ENCODE measurements at regions of chr21 and their contacts with region 1.

Region 1: DNA sequence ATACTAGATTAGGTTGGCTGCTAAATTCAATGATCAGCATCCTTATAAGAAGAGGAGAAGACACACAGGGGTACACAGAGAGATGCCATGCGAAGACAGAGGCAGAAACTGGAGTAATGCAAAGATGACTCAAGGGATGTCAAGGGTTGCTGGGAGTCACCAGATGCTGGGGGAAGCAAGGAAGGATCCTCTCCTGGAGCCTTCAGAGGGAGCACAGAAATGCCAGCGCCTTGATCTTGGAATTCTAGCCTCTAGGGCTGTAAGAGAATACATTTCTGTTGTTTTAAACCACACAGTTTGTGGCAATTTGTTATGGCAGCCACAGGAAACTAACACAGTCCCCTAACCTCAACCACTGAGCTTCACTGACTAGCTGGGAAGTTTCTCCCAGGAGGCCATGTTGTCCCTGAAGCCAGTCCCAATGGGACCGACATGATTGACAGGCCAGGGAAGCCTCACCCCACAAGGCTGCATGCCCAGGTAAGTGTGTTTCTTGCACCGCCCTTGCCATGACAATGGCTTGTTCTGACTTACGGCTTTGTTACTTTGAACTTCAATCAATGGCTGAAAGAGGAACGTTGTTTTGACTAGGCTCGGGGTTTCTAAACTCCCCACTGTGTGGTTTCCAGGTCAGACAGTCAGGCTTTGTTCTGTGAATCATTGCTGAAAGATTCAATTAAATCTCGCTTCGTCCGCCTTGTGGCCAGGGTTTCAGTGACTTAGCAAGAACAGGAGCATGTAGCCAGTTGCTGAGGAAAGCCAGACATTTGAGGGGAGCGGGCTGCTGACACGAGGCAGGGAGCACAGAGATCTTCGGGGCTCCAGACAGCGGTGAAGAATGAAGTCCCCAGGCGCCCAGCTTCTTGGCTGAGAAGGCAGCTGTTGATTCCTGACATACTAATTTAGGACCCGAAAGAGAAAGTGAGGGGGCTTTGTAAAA is 62.3 kb downstream of the RUNX1 start:
- DNase-seq: peak; percentile 82
- H3K4me3 Mint-ChIP-seq: peak overlapping the region; percentile 61
- H3K27ac Mint-ChIP-seq: peak overlapping the region; percentile 77
- H3K4me1 Mint-ChIP-seq: peaks cover 94% of the 10 kb centered on the region
- H3K27me3 Mint-ChIP-seq: no peaks in the 10 kb centered on the region

Region 2: DNA sequence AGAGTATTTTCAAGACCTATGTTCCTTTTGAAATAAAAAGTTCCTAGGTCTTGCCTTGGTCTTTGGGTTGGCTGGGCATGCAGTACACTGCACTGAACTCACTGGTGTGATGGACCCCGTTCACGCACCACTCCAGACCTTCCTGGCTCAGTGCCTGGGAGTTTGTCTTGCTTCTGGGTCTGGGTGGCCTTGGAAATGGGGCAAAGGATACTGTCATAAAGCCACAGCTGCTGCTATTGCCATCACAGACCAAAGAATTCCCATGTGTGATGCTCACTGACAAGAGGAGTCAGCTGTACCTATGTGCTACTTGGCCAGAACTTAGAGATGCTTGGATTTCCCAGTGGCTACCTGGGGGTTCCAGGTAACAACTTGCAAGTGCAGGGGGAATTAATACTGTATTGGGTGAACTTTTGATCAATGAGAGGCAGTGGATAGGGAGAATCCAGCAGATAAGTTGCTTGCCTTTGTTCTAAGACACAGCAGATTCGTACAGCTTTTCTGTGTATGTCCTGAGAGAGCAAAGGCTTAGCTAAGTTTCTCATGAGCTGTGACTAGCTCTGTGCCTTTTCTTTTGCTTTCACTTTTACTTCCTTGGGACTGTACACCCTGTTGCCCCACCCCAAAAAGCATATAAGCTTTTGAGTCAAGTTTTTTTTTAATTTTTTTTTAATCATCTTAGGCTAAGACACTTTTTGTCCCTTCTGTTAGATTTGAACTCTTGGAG is 53.1 kb before region 1 on chr21:
- CTCF ChIA-PET with region 1: interaction called, 13 read pairs
- POLR2A ChIA-PET with region 1: interaction called, 28 read pairs
- DNase-seq: no peak
- H3K4me3 Mint-ChIP-seq: peak overlapping the region; percentile 63
- H3K27ac Mint-ChIP-seq: peak overlapping the region; percentile 95
- H3K4me1 Mint-ChIP-seq: peaks cover 79% of the 10 kb centered on the region
- H3K27me3 Mint-ChIP-seq: no peaks in the 10 kb centered on the region

Region 3: DNA sequence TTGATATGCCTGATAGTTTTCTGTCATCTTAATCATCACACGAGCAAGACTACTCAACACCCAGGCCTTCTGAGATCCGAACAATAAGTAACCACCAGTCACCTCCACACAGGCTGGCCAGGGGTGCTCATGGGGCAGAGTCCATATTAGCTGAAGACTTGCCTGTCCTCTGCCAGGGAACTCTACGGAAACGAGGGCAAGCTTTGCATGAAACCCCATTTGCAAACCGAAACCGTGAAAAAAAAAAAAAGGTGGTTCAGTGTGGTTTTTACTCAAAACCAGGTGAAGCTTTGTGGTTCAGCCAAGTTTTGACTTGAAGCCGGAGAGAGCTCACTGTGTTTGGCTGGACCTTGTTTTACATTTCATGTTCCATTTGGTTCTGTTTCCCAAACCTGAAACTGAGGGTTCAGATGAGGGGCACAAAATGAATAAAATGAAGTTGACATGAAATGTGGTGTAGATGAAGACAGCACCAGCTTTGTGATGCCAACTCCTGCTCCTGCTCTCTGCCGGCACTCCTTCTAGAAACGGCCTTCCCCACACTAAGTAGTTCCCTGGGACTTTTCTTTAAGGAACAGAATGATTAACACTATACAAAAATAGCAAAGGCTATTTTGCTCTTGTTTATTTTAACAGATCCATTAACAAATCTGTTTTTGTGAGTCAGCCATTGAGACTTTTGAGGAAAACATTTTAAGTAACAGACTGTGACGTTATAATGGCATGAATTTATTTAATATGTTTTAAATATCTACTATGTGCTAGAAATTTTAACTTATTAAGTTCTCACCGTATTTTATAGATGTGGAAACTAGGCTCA is 12.5 kb before region 1 on chr21:
- CTCF ChIA-PET with region 1: interaction called, 20 read pairs
- POLR2A ChIA-PET with region 1: interaction called, 66 read pairs
- DNase-seq: peak; percentile 64
- H3K4me3 Mint-ChIP-seq: peak overlapping the region; percentile 60
- H3K27ac Mint-ChIP-seq: peak overlapping the region; percentile 80
- H3K4me1 Mint-ChIP-seq: peaks cover 78% of the 10 kb centered on the region
- H3K27me3 Mint-ChIP-seq: peaks cover 9% of the 10 kb centered on the region

Region 4: DNA sequence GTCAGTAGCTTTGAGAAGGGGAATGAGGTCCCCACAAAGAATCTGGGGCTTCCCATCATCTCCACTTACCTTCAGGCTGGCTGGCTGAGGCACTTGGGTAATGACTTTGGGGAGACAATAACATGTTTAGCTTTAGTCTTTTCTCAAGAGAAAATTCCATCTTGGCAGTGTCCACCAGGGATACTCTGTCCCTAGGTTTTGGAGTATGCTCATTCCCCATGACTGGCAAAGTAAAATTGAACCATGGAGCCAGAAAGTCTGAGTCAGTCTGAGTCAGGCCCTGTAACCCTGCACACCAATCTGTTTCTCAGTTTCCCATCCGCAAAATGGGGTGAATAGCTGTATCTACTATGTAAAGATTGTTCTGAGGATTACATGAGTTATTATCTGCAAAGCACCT is 34.1 kb after region 1 on chr21:
- CTCF ChIA-PET with region 1: interaction called, 10 read pairs
- POLR2A ChIA-PET with region 1: interaction called, 81 read pairs
- DNase-seq: no peak
- H3K4me3 Mint-ChIP-seq: no peak overlapping the region
- H3K27ac Mint-ChIP-seq: no peak overlapping the region
- H3K4me1 Mint-ChIP-seq: peaks cover 63% of the 10 kb centered on the region
- H3K27me3 Mint-ChIP-seq: no peaks in the 10 kb centered on the region

Region 5: DNA sequence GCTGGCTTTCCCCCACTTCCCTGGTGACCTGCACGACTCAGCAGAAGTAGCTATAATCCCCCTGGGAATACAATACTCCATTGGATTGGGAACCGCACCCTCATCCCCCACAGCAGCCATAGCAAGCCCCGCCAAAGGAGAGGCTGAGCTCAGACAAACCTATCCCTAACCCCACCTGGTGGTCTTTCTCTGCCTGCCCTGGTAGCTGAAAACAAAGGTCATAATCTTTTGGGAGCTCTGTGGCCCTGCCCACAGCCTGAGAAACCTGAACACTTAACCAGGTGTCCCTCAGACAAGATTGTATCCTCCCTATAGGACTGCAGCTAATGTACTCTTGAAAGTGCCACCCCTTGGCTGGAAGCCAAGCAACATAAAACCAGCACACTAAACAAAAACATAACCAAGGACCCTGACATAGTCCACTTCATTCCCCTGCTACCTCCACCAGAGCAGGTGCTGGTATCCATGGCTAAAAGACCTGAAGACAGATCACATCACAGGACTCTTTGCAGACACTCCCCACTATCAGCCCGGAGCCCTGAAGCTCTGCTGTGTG is 133.9 kb after region 1 on chr21:
- CTCF ChIA-PET with region 1: no interaction called
- POLR2A ChIA-PET with region 1: no interaction called
- DNase-seq: no peak
- H3K4me3 Mint-ChIP-seq: no peak overlapping the region
- H3K27ac Mint-ChIP-seq: no peak overlapping the region
- H3K4me1 Mint-ChIP-seq: no peaks in the 10 kb centered on the region
- H3K27me3 Mint-ChIP-seq: peaks cover 8% of the 10 kb centered on the region